ENCODE measurements at regions of chrX and their contacts with region 1.

Region 1: GRCh38 chrX:103175944-103176753 is 38.8 kb upstream of the BEX4 start:
- DNase-seq: peak in 3 of 4 donors; percentile 19 to 44 (median 36)
- ATAC-seq: peak; percentile 96
- H3K4me3 ChIP-seq: no peak overlapping the region
- H3K27ac ChIP-seq: no peak overlapping the region
- H3K4me1 ChIP-seq: no peaks in the 10 kb centered on the region
- H3K27me3 ChIP-seq: peaks cover 0 to 2% of the 10 kb centered on the region in 2 donors
- CTCF ChIP-seq: peak; percentile 56 to 68

Region 2: DNA sequence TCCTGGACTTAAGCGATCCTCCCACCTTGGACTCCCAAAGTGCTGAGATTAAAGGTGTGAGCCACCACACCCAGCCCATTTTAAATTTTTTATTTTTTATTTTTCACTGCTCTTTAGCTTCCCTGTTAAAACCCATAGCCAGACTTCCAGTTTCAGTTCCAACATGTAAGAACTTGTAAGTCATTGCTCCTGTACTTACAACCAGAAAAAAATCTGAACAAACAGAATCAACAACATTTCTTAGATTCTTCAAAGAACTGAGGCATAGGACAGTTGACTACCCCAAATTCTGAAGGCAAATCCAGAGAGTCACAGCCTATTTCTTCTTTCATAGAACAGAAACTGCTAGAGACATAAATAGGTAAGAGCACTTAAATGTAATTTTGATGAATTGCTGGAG is 447.5 kb before region 1 on chrX:
- intact Hi-C with region 1: no loop called
- DNase-seq: no peak
- ATAC-seq: no peak
- H3K4me3 ChIP-seq: no peak overlapping the region
- H3K27ac ChIP-seq: no peak overlapping the region
- H3K4me1 ChIP-seq: no peaks in the 10 kb centered on the region
- H3K27me3 ChIP-seq: no peaks in the 10 kb centered on the region
- CTCF ChIP-seq: no peak

Region 3: GRCh38 chrX:102950908-102951866 is 225.0 kb before region 1 on chrX:
- intact Hi-C with region 1: loop called in 1 of 2 experiments (anchors 10 kb)
- DNase-seq: peak in 1 of 4 donors; percentile 16
- ATAC-seq: peak; percentile 93
- H3K4me3 ChIP-seq: no peak overlapping the region
- H3K27ac ChIP-seq: no peak overlapping the region
- H3K4me1 ChIP-seq: no peaks in the 10 kb centered on the region
- H3K27me3 ChIP-seq: no peaks in the 10 kb centered on the region
- CTCF ChIP-seq: peak; percentile 45 to 47

Region 4: GRCh38 chrX:103056902-103057301 is 119.2 kb before region 1 on chrX:
- intact Hi-C with region 1: no loop called
- DNase-seq: no peak
- ATAC-seq: no peak
- H3K4me3 ChIP-seq: no peak overlapping the region
- H3K27ac ChIP-seq: no peak overlapping the region
- H3K4me1 ChIP-seq: no peaks in the 10 kb centered on the region
- H3K27me3 ChIP-seq: no peaks in the 10 kb centered on the region
- CTCF ChIP-seq: no peak